Naive thymus-derived CD4-positive, alpha-beta T cell (primary cell): ENCODE measurements at regions of chr10 and their contacts with region 1.

Region 1: GRCh38 chr10:16891375-16892313 is 74.4 kb upstream of the RSU1 start:
- DNase-seq: peak in 3 of 9 donors; percentile 7 to 18 (median 15)
- ATAC-seq: peak; percentile 69
- H3K4me3 ChIP-seq: no peak overlapping the region
- H3K4me3 Mint-ChIP-seq: peak overlapping the region; percentile 35 to 81 (median 58)
- H3K27ac ChIP-seq: no peak overlapping the region
- H3K27ac Mint-ChIP-seq: peak overlapping the region in 2 of 9 donors; percentile 40 to 49
- H3K4me1 ChIP-seq: no peaks in the 10 kb centered on the region
- H3K4me1 Mint-ChIP-seq: peaks cover 5 to 9% (median 5%) of the 10 kb centered on the region in 7 donors
- H3K27me3 ChIP-seq: no peaks in the 10 kb centered on the region
- H3K27me3 Mint-ChIP-seq: peaks cover 0 to 42% (median 0%) of the 10 kb centered on the region in 5 donors

Region 2: DNA sequence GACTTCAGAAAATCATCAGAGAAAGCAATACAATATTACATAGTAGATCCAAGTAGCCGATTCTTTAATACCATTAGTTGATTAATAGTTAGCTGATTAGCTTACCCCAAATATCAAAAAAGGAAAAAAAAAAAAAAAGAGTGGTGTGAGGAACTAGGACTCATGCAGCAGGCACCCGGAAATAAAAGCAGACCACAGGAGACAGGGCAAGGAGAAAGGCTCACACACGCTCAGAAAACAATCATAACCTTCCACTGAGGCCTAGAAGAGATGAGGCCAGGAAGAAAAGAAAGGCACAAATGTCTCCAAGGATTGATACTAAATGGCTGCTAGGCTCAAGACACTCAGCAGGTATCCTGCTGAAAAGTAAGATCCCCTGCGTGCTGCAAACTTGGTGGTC is 283.9 kb after region 1 on chr10:
- CTCF ChIA-PET with region 1: no interaction called
- POLR2A ChIA-PET with region 1: no interaction called
- intact Hi-C with region 1: loop called in 1 of 2 experiments (anchors 5 kb)
- DNase-seq: peak in 2 of 9 donors; percentile 6 to 12
- ATAC-seq: peak; percentile 64
- H3K4me3 ChIP-seq: no peak overlapping the region
- H3K4me3 Mint-ChIP-seq: peak overlapping the region in 9 of 10 donors; percentile 17 to 78 (median 62)
- H3K27ac ChIP-seq: no peak overlapping the region
- H3K27ac Mint-ChIP-seq: peak overlapping the region in 7 of 9 donors; percentile 19 to 91 (median 74)
- H3K4me1 ChIP-seq: no peaks in the 10 kb centered on the region
- H3K4me1 Mint-ChIP-seq: peaks cover 6 to 27% (median 19%) of the 10 kb centered on the region in 7 donors
- H3K27me3 ChIP-seq: no peaks in the 10 kb centered on the region
- H3K27me3 Mint-ChIP-seq: peaks cover 0 to 2% (median 0%) of the 10 kb centered on the region in 5 donors

Region 3: DNA sequence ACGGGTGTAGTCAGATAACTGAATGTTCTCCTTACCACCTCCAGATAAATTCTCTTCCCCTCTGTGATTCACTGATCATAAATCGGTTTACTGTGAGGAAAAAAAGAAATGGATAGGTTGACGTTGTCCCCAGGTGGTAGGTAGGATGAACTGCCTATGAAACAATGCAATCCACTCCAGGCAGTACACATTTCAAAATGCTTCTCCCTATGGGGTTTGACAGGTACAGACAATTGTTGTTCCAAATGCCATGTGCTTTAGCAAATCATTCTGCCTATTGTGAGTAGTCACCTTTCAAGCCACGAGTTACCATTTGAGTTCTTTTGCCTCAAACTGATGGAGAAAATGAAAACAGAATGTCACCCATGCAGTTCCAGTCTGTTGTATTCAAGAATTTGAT is 358.2 kb after region 1 on chr10:
- CTCF ChIA-PET with region 1: no interaction called
- POLR2A ChIA-PET with region 1: no interaction called
- intact Hi-C with region 1: loop called (anchors 1 to 5 kb)
- DNase-seq: peak in 4 of 9 donors; percentile 26 to 39 (median 28)
- ATAC-seq: peak; percentile 47
- H3K4me3 ChIP-seq: no peak overlapping the region
- H3K4me3 Mint-ChIP-seq: no peak overlapping the region
- H3K27ac ChIP-seq: no peak overlapping the region
- H3K27ac Mint-ChIP-seq: no peak overlapping the region
- H3K4me1 ChIP-seq: no peaks in the 10 kb centered on the region
- H3K4me1 Mint-ChIP-seq: peaks cover 0 to 4% (median 0%) of the 10 kb centered on the region in 7 donors
- H3K27me3 ChIP-seq: no peaks in the 10 kb centered on the region
- H3K27me3 Mint-ChIP-seq: peaks cover 0 to 5% (median 0%) of the 10 kb centered on the region in 5 donors